ENCODE measurements at regions of chr3 and their contacts with region 1.

Region 1: GRCh38 chr3:73056014-73056844 is 5.2 kb upstream of the EBLN2 start:
- DNase-seq: no peak
- ATAC-seq: peak; percentile 49

Region 2: DNA sequence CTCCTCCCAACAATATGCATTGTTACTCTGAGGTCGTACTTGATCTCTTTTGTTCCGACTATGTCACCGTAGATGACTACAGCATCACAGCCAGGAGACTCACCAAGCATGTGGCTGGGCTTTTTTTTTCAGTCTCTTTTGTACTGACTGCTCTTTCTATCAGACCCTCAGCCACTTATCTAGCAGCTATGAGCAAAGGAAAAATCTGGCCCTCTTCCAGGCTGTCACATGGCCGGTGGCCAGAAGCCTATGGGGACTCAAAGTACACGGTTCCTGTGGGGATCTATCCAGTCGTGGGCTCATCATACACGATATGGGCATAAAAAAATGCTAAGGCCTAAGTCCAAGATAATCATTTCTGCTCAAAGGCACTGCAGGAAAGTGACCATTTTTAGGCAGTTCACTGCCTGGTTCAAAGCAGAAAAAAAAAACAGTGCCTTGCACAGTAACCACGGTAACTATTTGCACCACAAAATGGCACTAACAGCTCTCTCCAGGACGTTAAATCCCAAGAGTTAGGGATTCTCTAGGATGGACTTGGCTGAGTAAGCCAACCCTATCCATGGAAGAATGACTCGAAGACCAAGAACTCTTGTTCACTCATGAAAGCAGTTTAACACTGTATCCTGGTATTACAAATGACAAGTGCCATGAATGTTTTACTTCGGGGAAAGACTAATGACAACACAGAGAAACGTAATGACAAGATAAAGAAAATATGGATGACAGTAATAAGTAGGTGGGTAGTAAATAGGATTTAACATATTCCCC is 258.3 kb before region 1 on chr3:
- intact Hi-C with region 1: no loop called
- DNase-seq: peak; percentile 67
- ATAC-seq: peak; percentile 94

Region 3: DNA sequence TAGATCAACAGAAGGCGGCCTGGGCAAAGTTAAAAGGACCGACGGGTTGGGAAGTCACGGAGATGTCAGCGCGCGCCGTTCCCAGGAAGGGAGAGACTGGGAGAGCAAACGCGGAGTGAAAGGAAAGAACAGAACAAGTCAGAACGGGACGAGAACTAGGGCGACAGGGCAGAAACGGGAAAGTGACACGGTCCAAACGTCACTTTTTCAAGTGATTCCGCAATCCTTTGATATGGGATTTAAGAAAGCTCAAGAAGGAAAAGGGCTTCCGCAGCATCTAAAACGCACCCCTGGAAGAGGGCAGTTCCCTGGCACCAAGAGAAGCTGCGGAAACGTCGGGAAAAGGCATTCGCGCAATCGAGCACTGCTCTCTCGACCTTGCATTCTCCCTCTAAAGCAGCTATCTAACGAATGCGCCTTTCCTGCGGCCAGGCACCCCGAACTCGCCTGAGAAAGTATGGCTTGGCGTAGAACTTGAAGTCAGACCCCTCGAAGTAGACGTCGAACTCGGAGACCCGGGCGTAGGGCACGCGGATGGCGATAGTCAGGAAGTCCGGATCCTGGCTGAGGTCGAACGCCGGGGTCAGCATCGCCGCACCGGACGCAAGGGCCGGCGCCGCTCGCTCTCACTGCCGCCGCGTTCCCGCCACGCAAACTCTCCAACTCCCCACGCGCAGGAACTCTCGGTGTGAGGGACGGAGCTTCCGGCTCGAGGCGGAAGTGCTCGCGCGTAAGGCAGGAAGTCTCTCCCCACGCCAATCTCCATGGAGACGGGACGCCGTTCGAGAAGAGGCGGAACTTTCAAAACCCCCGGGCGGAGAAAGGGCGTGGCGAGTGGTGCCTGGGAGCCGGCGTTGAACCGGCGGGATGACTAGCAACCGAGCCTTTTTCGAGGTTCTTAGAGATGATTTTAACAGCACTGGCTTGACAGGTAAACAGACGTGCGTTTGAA is 208.2 kb before region 1 on chr3 and contains the start of gene SHQ1:
- intact Hi-C with region 1: loop called (anchors 10 kb)
- DNase-seq: peak; percentile 97
- ATAC-seq: peak; percentile 98
- total RNA-seq, gene SHQ1: 17.0 TPM

Region 4: DNA sequence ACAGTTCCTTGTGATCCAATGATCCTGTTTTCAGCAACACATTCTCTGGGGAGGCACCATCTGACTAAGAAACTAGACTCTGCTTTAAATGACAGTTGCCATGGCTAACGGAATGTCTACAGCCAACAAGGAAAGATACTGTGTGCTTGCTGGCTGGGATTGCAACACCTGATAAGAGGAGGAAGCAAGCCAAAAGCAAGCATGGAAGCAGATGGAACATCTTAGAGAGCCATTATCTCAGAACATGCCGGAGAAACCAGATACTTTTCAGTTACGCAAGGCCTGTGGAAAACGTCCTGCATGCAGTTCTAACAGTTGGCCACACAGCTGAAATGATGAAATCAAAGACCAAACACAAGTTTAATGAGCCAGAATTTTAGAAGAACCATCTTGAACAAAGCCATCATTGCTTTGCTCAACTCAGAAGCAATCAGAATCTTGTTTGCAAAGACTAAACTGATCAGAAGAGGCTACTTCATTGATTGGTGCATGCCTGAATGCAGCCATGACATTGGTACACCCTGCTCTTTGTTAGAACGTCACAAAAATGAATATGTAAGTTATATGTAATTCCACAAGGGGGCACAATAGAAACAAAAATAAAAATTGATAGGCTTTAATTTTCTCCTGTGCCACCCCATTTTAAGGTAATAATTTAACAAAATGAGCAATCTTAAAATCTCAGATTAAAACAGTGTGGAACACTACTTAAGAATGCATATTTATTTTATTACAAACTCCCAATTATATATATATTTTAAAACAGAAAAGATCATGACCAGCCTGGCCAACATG is 117.6 kb before region 1 on chr3:
- intact Hi-C with region 1: loop called (anchors 2 kb)
- DNase-seq: no peak
- ATAC-seq: peak; percentile 92

Region 5: GRCh38 chr3:72999951-73000350 is 56.3 kb before region 1 on chr3:
- intact Hi-C with region 1: loop called (anchors 10 kb)
- DNase-seq: no peak
- ATAC-seq: no peak